ENCODE measurements at regions of chr1 and their contacts with region 1.

Region 1: DNA sequence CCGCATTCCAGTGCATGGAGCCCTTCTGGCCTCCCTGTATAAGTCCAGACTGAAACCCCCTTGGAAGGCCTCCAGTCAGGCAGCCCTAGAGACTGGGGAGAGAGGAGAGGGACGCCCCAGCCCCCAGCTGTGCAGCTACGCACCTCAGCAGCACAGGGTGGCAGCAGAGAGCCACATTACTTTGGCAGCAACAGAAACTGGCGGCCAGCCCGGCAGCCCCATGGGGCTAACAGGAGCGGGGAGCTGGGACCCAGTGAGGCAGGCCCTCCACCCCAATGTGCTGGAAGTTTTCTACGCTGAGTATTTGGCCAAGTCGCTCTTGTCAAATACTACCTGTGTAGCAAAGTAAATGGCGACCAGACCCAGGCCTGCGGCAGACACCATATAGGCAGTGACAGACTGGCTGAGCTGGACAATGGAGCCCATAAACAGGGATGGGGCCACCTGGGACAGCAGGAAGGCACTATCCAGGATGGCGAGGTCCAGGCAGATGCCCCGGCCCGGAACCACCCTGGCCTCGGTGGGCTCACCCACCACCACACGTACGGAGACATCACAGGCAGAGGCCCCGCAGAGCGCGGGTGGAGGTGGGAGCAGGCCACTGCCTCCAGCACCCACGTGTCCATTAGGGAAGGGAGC is 21.2 kb downstream of the SLC45A3 start:
- DNase-seq: peak; percentile 57 to 82 (median 75)
- ATAC-seq: peak; percentile 88
- H3K4me3 ChIP-seq: no peak overlapping the region
- H3K4me3 Mint-ChIP-seq: no peak overlapping the region
- H3K27ac ChIP-seq: no peak overlapping the region
- H3K27ac Mint-ChIP-seq: no peak overlapping the region
- H3K4me1 ChIP-seq: no peaks in the 10 kb centered on the region
- H3K4me1 Mint-ChIP-seq: no peaks in the 10 kb centered on the region
- H3K27me3 ChIP-seq: no peaks in the 10 kb centered on the region
- H3K27me3 Mint-ChIP-seq: no peaks in the 10 kb centered on the region
- CTCF ChIP-seq: peak; percentile 82

Region 2: DNA sequence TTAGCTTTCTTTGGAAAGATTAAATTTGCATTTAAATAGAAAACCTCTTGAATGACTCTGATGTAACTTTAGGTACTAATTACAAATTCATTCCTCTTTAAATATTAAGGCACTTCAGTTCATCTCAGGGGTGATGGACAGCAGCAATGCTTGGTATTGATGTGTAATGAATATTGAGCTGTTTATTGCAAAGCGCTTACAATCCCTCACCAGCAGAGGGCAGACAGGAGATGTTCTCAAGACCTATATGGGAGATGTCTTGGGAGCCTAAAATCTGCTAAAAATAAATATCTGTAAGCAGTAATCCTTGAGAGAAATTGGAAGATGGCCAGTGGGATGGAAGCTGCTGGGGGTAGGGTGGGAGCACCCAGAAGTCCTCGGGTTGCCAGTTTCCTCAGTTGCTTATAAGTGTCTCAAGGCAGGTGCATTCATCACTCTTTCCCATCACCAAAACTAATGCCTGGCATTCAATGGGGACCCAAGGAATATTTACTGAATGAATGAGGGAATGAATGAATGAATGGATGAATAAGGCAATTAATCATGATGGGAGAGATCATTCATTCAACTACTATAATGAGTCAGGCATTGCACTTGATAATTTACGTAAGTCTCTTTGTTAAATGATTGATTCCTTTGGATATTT is 304.7 kb before region 1 on chr1:
- CTCF ChIA-PET with region 1: interaction called, 4 read pairs
- POLR2A ChIA-PET with region 1: no interaction called
- intact Hi-C with region 1: loop called in 1 of 2 experiments (anchors 10 kb)
- DNase-seq: peak; percentile 30 to 81 (median 67)
- ATAC-seq: peak; percentile 87
- H3K4me3 ChIP-seq: no peak overlapping the region
- H3K4me3 Mint-ChIP-seq: no peak overlapping the region
- H3K27ac ChIP-seq: no peak overlapping the region
- H3K27ac Mint-ChIP-seq: no peak overlapping the region
- H3K4me1 ChIP-seq: no peaks in the 10 kb centered on the region
- H3K4me1 Mint-ChIP-seq: no peaks in the 10 kb centered on the region
- H3K27me3 ChIP-seq: no peaks in the 10 kb centered on the region
- H3K27me3 Mint-ChIP-seq: peaks cover 16% of the 10 kb centered on the region
- CTCF ChIP-seq: peak; percentile 97

Region 3: GRCh38 chr1:205543411-205544301 is 115.4 kb before region 1 on chr1:
- CTCF ChIA-PET with region 1: interaction called, 254 read pairs
- POLR2A ChIA-PET with region 1: no interaction called
- intact Hi-C with region 1: no loop called
- DNase-seq: peak in 2 of 9 experiments; percentile 13 to 27
- ATAC-seq: peak; percentile 8
- H3K4me3 ChIP-seq: no peak overlapping the region
- H3K4me3 Mint-ChIP-seq: no peak overlapping the region
- H3K27ac ChIP-seq: no peak overlapping the region
- H3K27ac Mint-ChIP-seq: no peak overlapping the region
- H3K4me1 ChIP-seq: no peaks in the 10 kb centered on the region
- H3K4me1 Mint-ChIP-seq: peaks cover 6% of the 10 kb centered on the region
- H3K27me3 ChIP-seq: peaks cover 4 to 6% of the 10 kb centered on the region in 2 experiments
- H3K27me3 Mint-ChIP-seq: peaks cover 52% of the 10 kb centered on the region
- CTCF ChIP-seq: no peak

Region 4: GRCh38 chr1:205600085-205600484 is 59.0 kb before region 1 on chr1:
- CTCF ChIA-PET with region 1: interaction called, 401 read pairs
- POLR2A ChIA-PET with region 1: no interaction called
- intact Hi-C with region 1: no loop called
- DNase-seq: peak in 2 of 9 experiments; percentile 5
- ATAC-seq: no peak
- H3K4me3 ChIP-seq: no peak overlapping the region
- H3K4me3 Mint-ChIP-seq: no peak overlapping the region
- H3K27ac ChIP-seq: no peak overlapping the region
- H3K27ac Mint-ChIP-seq: peak overlapping the region; percentile 71
- H3K4me1 ChIP-seq: no peaks in the 10 kb centered on the region
- H3K4me1 Mint-ChIP-seq: peaks cover 27% of the 10 kb centered on the region
- H3K27me3 ChIP-seq: no peaks in the 10 kb centered on the region
- H3K27me3 Mint-ChIP-seq: no peaks in the 10 kb centered on the region
- CTCF ChIP-seq: no peak

Region 5: DNA sequence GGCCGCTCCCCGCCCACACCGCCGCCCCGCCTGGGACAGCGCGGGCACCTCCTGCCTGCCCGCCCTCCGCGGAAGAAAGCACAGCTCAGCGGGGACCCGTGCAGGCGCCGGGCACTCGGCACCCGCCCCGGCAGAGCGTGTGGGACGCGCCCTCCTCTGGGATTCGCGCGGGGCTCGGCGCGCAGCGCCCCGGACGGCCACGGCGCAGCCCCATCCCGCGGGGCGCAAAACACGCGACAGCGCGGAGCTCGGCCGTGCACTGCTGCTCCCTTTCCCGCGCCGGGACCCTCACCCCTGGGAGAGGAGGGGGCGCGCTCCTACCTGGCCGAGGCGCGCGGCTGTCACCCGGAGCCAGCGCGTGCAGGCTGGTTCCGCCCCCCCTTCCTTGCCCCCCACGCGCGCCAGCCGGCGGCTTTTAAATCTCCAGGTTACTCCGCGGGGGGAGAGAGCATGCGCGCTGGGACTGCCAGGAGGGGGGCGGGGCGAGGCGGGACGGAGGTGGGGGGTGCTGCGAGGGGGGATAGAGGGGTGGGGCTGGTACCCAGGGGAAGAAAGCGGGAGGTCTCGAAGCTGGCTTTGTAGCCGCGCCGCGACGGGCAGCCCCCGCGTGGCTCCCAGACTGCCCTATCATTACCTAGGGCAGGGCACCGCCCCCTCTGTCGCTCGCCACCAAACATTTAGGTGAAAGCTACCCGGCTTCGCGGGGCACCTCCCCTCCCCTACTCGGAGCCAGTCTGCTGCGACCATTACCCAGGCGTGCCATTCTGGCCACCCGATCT is 21.2 kb after region 1 on chr1 and contains the start of gene SLC45A3:
- CTCF ChIA-PET with region 1: interaction called, 30 read pairs
- POLR2A ChIA-PET with region 1: interaction called, 3 read pairs
- intact Hi-C with region 1: no loop called
- DNase-seq: peak in 8 of 9 experiments; percentile 16 to 61 (median 42)
- ATAC-seq: peak; percentile 74
- H3K4me3 ChIP-seq: peak within 1 kb of the TSS; percentile 8 to 57
- H3K4me3 Mint-ChIP-seq: peak within 1 kb of the TSS; percentile 82
- H3K27ac ChIP-seq: no peak within 1 kb of the TSS
- H3K27ac Mint-ChIP-seq: no peak within 1 kb of the TSS
- H3K4me1 ChIP-seq: peaks cover 13% of the 10 kb centered on the region
- H3K4me1 Mint-ChIP-seq: peaks cover 13% of the 10 kb centered on the region
- H3K27me3 ChIP-seq: peaks cover 0 to 3% of the 10 kb centered on the region in 2 experiments
- H3K27me3 Mint-ChIP-seq: peaks cover 13% of the 10 kb centered on the region
- CTCF ChIP-seq: no peak
- total RNA-seq, gene SLC45A3: 0.16 TPM in 1 of 2 experiments, not detected in the other

Region 6: DNA sequence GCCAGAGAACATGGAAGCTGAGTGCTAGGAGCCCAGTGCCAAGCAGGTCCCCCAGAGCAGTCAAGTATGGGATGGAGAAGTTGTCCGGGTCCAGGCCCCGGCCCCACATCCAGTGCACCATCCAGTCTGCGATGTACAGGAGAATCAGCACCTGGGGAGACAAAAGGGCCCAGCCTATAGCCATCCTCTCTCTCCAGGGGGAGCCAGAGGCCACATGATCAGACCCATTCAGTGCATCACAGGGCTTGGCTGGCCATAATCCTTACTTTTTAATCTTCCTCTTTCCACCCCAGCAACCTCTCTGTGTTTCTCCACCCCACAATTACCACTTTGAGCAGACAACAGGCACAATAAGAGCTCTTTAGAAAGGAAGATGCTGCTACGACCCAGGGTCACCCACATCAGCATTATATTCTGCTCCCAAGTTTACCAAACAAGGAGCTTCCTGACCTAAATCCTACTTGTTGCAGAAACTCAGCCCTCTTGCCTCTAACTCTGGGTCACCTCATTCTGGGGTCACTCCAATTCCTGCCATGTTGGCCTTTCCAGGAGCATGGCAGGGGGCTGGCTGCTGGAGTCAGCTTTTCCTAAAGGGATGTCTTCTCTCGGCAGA is 132.6 kb after region 1 on chr1:
- CTCF ChIA-PET with region 1: interaction called, 18 read pairs
- POLR2A ChIA-PET with region 1: no interaction called
- intact Hi-C with region 1: loop called in 1 of 2 experiments (anchors 2 kb)
- DNase-seq: peak; percentile 26 to 75 (median 65)
- ATAC-seq: peak; percentile 86
- H3K4me3 ChIP-seq: no peak overlapping the region
- H3K4me3 Mint-ChIP-seq: no peak overlapping the region
- H3K27ac ChIP-seq: no peak overlapping the region
- H3K27ac Mint-ChIP-seq: no peak overlapping the region
- H3K4me1 ChIP-seq: no peaks in the 10 kb centered on the region
- H3K4me1 Mint-ChIP-seq: no peaks in the 10 kb centered on the region
- H3K27me3 ChIP-seq: no peaks in the 10 kb centered on the region
- H3K27me3 Mint-ChIP-seq: no peaks in the 10 kb centered on the region
- CTCF ChIP-seq: peak; percentile 72

Region 7: DNA sequence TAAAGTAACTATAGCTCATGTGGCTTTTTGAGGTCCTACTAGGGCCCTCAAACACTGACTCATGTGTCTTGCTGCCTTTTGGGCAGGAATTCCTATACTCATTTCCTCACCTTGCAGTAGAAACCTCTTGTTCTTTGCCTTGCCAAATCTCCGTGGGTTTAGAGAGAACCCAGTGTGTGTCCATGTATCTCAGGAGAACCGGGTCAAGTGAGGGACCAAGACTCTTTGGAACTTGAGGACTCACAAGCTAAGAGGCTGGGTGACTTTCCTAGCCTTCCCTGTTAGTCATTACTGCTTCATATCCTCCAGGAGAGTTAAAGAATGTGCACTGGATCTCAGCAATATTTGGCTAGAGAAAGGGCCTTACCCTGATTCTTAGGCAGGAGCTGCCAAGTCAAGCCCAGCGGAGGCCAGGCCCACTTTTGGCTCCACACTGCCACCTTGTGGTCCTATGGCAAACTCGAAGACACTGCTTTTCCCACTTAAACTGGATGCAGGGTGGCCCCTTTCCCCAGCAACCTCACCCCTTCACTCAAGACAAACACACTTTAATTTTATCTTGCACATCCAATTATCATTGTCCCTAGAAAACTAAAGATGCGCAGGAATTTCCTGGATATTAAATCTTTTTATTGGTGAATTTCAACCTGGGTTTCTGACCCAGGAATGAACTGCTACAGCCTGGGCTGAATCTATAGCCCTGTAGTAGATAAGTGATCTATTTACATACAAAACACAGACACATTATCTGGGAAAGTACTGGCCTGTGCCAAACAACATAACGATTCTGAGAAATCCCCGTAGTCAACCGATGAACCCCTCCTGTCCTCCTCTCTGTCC is 447.5 kb after region 1 on chr1:
- CTCF ChIA-PET with region 1: no interaction called
- POLR2A ChIA-PET with region 1: no interaction called
- intact Hi-C with region 1: loop called in 1 of 2 experiments (anchors 5 kb)
- DNase-seq: peak; percentile 56 to 85 (median 73)
- ATAC-seq: peak; percentile 79
- H3K4me3 ChIP-seq: no peak overlapping the region
- H3K4me3 Mint-ChIP-seq: no peak overlapping the region
- H3K27ac ChIP-seq: no peak overlapping the region
- H3K27ac Mint-ChIP-seq: no peak overlapping the region
- H3K4me1 ChIP-seq: no peaks in the 10 kb centered on the region
- H3K4me1 Mint-ChIP-seq: no peaks in the 10 kb centered on the region
- H3K27me3 ChIP-seq: no peaks in the 10 kb centered on the region
- H3K27me3 Mint-ChIP-seq: peaks cover under 1% of the 10 kb centered on the region
- CTCF ChIP-seq: peak; percentile 71

Measured in CD8-positive, alpha-beta T cell (primary cell).